AG04450 (cell line): ENCODE measurements at regions of chr12 and their contacts with region 1.

Region 1: GRCh38 chr12:93403988-93404803 is 26.5 kb downstream of the NUDT4 start:
- DNase-seq: no peak
- H3K4me3 ChIP-seq: no peak overlapping the region
- H3K27ac ChIP-seq: no peak overlapping the region
- H3K27me3 ChIP-seq: no peaks in the 10 kb centered on the region
- CTCF ChIP-seq: no peak

Region 2: DNA sequence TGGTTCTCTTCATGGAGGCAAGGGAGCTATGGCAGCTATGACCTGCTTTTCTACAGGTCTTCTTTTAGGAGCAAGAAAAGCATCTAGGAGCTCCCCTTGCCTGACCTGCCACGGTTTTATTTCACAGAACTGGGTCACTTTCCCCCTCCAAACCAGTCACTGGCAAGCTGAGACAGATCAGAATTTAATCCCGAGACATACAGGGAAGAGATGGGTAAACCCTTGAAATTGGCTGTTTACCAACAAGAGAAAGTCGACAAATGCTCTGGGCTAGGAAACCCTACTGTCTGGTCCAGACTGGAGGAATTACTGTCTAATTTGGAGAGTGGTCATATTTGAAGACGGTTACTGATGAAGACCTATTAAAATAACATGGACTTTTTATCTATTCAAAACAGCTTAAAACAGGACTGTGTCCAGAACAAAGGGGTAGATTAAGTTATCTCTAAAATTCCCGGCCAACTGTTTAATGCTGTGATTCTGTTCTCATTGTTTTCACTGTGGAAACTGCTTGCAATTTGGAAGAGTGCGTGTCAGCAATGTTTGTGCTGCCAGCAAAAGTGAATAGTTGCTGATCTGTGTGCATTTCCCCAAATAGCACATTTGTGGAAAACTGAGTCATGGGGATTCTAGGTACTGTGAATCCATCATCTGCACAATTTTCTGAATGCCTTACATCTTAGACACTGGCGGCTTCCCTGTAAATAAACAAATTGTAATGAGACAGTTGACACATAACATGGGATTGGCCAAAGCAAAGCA is 401.7 kb before region 1 on chr12:
- CTCF ChIA-PET with region 1: interaction called, 14 read pairs
- POLR2A ChIA-PET with region 1: no interaction called
- DNase-seq: peak; percentile 52
- H3K4me3 ChIP-seq: no peak overlapping the region
- H3K27ac ChIP-seq: no peak overlapping the region
- H3K27me3 ChIP-seq: no peaks in the 10 kb centered on the region
- CTCF ChIP-seq: no peak